ENCODE measurements at regions of chr7 and their contacts with region 1.

Region 1: GRCh38 chr7:100478966-100479665 is at the start of gene TSC22D4:
- DNase-seq: peak; percentile 95 to 99 (median 97)
- ATAC-seq: peak; percentile 93 to 94
- H3K4me3 ChIP-seq: peak within 1 kb of the TSS; percentile 85
- H3K27ac ChIP-seq: peak within 1 kb of the TSS; percentile 69
- H3K4me1 ChIP-seq: peaks cover 12% of the 10 kb centered on the region
- H3K27me3 ChIP-seq: no peaks in the 10 kb centered on the region
- total RNA-seq, gene TSC22D4: 36.7 to 63.6 (median 48.6) TPM

Region 2: GRCh38 chr7:100545360-100546128 is 66.4 kb after region 1 on chr7:
- intact Hi-C with region 1: loop called in 1 of 4 experiments (anchors 5 kb)
- DNase-seq: no peak
- ATAC-seq: peak; percentile 80 to 90
- H3K4me3 ChIP-seq: no peak overlapping the region
- H3K27ac ChIP-seq: peak overlapping the region; percentile 97
- H3K4me1 ChIP-seq: peaks cover 28% of the 10 kb centered on the region
- H3K27me3 ChIP-seq: no peaks in the 10 kb centered on the region

Region 3: GRCh38 chr7:100556541-100556940 is 77.4 kb after region 1 on chr7:
- intact Hi-C with region 1: loop called in 2 of 4 experiments (anchors 5 kb)
- DNase-seq: no peak
- ATAC-seq: no peak
- H3K4me3 ChIP-seq: no peak overlapping the region
- H3K27ac ChIP-seq: no peak overlapping the region
- H3K4me1 ChIP-seq: no peaks in the 10 kb centered on the region
- H3K27me3 ChIP-seq: no peaks in the 10 kb centered on the region

Region 4: GRCh38 chr7:100680167-100680575 is 201.1 kb after region 1 on chr7:
- intact Hi-C with region 1: loop called in 1 of 4 experiments (anchors 10 kb)
- DNase-seq: peak; percentile 71 to 82 (median 72)
- ATAC-seq: peak; percentile 41 to 51
- H3K4me3 ChIP-seq: no peak overlapping the region
- H3K27ac ChIP-seq: peak overlapping the region; percentile 21
- H3K4me1 ChIP-seq: peaks cover 2% of the 10 kb centered on the region
- H3K27me3 ChIP-seq: no peaks in the 10 kb centered on the region